ENCODE measurements at regions of chr17 and their contacts with region 1.

Region 1: DNA sequence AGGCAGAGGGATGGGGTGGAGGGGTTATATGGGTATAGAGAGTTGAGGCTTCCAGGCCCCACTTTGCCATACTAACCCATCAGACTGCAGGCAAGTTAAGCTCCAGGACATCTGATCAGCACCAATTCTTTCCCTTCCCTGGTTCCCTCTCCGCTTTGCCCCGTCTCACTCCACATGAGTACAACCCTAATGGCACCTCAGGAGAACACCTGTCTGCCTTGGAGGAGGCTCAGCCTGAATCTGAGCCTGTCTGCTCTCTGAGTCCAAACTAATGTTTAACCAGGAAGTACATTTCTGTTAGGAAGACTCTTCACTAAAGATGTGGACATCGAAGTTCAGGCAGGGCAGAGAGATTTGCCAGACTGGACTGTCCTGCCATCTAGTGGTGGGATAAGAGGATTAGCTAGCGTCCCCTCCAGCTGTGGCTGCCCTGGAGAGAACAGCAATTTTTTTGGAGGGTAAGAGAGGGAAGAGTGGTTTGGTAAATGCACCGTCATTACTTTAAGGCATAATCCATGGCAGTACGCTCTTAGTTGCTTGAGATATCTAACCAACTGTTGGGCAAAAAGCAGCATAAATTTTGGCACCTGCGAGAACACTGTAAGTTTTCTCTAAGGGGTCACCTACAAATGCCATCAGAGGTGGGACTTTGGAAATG is 29.2 kb upstream of the LRRC75A start:
- DNase-seq: peak; percentile 79
- H3K4me3 ChIP-seq: no peak overlapping the region
- H3K27ac ChIP-seq: peak overlapping the region; percentile 31
- H3K4me1 ChIP-seq: peaks cover 13% of the 10 kb centered on the region
- H3K27me3 ChIP-seq: peaks cover 0 to 2% of the 10 kb centered on the region in 2 experiments
- CTCF ChIP-seq: peak; percentile 80 to 85
- POLR2A ChIP-seq: no peak

Region 2: GRCh38 chr17:16363749-16364536 is 157.3 kb before region 1 on chr17:
- CTCF ChIA-PET with region 1: interaction called, 60 read pairs
- POLR2A ChIA-PET with region 1: no interaction called
- dilution Hi-C with region 1: no loop called
- intact Hi-C with region 1: loop called (anchors 1 kb)
- DNase-seq: peak; percentile 70
- H3K4me3 ChIP-seq: no peak overlapping the region
- H3K27ac ChIP-seq: no peak overlapping the region
- H3K4me1 ChIP-seq: no peaks in the 10 kb centered on the region
- H3K27me3 ChIP-seq: no peaks in the 10 kb centered on the region
- CTCF ChIP-seq: peak; percentile 85 to 92
- POLR2A ChIP-seq: no peak

Region 3: GRCh38 chr17:16374129-16374528 is 147.1 kb before region 1 on chr17:
- CTCF ChIA-PET with region 1: no interaction called
- POLR2A ChIA-PET with region 1: no interaction called
- dilution Hi-C with region 1: no loop called
- intact Hi-C with region 1: no loop called
- DNase-seq: peak; percentile 20
- H3K4me3 ChIP-seq: no peak overlapping the region
- H3K27ac ChIP-seq: no peak overlapping the region
- H3K4me1 ChIP-seq: no peaks in the 10 kb centered on the region
- H3K27me3 ChIP-seq: no peaks in the 10 kb centered on the region
- CTCF ChIP-seq: no peak
- POLR2A ChIP-seq: no peak

Region 4: GRCh38 chr17:16428098-16428882 is 92.9 kb before region 1 on chr17:
- CTCF ChIA-PET with region 1: interaction called, 28 read pairs
- POLR2A ChIA-PET with region 1: no interaction called
- dilution Hi-C with region 1: no loop called
- intact Hi-C with region 1: loop called (anchors 1 kb)
- DNase-seq: peak; percentile 29
- H3K4me3 ChIP-seq: no peak overlapping the region
- H3K27ac ChIP-seq: no peak overlapping the region
- H3K4me1 ChIP-seq: no peaks in the 10 kb centered on the region
- H3K27me3 ChIP-seq: no peaks in the 10 kb centered on the region
- CTCF ChIP-seq: peak; percentile 61 to 81
- POLR2A ChIP-seq: no peak

Region 5: GRCh38 chr17:16444258-16444886 is 76.8 kb before region 1 on chr17:
- CTCF ChIA-PET with region 1: interaction called, 33 read pairs
- POLR2A ChIA-PET with region 1: interaction called, 4 read pairs
- dilution Hi-C with region 1: no loop called
- intact Hi-C with region 1: no loop called
- DNase-seq: no peak
- H3K4me3 ChIP-seq: no peak overlapping the region
- H3K27ac ChIP-seq: no peak overlapping the region
- H3K4me1 ChIP-seq: peaks cover 31% of the 10 kb centered on the region
- H3K27me3 ChIP-seq: no peaks in the 10 kb centered on the region
- CTCF ChIP-seq: no peak
- POLR2A ChIP-seq: peak; percentile 8

Region 6: DNA sequence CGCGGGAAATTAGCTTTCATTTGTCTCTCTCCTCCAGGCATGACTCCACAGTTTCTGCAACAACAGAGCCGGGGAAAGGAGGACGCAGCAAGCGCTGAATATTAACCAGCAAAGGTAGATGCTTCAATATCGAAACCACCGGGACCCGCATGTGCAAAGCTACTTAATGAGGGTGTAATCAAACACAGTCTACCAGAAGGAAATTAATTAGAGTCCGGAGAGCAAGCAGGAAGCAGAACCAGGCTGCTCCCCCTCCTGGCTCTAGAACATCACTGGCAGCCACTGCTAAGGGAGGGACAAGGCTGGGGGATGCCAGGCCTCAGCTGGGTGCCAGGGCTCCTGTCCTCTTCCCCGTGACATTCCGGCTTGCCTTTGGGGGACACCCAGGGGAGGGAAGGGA is 50.9 kb before region 1 on chr17:
- CTCF ChIA-PET with region 1: interaction called, 15 read pairs
- POLR2A ChIA-PET with region 1: no interaction called
- dilution Hi-C with region 1: no loop called
- intact Hi-C with region 1: no loop called
- DNase-seq: peak; percentile 33
- H3K4me3 ChIP-seq: no peak overlapping the region
- H3K27ac ChIP-seq: no peak overlapping the region
- H3K4me1 ChIP-seq: peaks cover 20% of the 10 kb centered on the region
- H3K27me3 ChIP-seq: no peaks in the 10 kb centered on the region
- CTCF ChIP-seq: peak in 1 of 2 donors; percentile 36
- POLR2A ChIP-seq: no peak

Region 7: DNA sequence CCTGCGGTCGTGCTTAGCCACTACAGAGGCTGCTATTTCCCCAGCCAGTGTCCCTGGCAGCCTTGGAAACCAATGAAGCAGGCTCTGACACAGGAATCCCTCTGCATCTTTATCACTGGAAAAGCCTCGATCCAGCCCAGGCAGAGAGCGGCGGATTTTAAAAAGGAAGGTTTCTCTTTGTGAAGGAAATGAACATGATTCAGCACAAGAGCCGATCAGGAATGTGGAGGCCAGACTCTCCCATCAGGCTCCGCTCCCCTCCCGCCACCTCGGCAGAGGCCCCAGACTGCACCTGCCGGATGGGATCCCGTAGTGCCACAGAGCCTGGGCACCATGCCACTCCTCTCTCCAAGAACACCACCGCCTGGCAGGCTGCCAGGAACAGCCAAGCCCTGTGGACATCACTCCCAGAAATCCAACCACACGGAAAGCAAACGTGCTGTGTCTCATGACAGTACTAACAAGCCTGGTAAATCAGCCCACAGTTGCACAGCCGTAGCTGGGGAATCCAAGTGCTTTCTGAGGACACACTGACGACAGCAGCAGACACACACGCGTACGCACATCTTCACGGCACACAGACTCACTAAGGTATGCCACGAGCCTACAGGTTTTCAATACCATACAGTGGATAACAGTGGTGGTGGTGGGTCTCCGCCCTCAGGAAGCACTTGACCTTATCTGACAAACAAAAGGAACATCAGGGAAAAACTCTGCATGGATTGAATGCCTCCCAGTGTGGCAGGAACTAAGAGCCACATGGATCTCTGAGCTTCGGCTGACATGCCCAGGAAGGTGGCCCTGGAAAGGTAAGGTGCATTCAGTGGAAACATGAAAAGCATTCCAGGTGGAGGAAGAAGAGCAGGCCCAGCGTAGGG is 34.6 kb before region 1 on chr17:
- CTCF ChIA-PET with region 1: interaction called, 15 read pairs
- POLR2A ChIA-PET with region 1: no interaction called
- dilution Hi-C with region 1: no loop called
- intact Hi-C with region 1: loop called (anchors 2 kb)
- DNase-seq: peak; percentile 83
- H3K4me3 ChIP-seq: peak overlapping the region in 2 of 3 experiments; percentile 5 to 9
- H3K27ac ChIP-seq: peak overlapping the region; percentile 80
- H3K4me1 ChIP-seq: peaks cover 41% of the 10 kb centered on the region
- H3K27me3 ChIP-seq: peaks cover 0 to 6% of the 10 kb centered on the region in 2 experiments
- CTCF ChIP-seq: no peak
- POLR2A ChIP-seq: peak; percentile 52

Region 8: DNA sequence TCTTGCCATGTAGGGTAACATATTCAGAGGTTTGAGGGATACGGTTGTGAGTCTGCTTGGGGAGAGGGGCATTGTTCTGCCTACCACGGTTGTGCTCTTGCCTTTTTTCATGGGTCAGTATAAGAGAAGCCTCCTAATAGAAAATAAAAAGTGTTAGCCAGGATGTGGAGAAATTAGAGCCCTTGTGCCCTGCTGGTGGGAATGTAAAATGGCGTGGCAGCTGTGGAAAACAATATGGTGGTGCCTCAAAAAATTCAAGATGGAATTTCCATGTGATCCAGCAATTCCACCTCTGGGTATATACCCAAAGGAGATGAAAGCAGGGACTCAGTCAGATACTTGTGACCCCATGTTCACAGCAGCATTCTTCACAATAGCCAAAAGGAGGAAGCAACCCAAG is 15.0 kb before region 1 on chr17:
- CTCF ChIA-PET with region 1: interaction called, 20 read pairs
- POLR2A ChIA-PET with region 1: no interaction called
- dilution Hi-C with region 1: no loop called
- intact Hi-C with region 1: no loop called
- DNase-seq: no peak
- H3K4me3 ChIP-seq: no peak overlapping the region
- H3K27ac ChIP-seq: no peak overlapping the region
- H3K4me1 ChIP-seq: no peaks in the 10 kb centered on the region
- H3K27me3 ChIP-seq: peaks cover 7 to 12% of the 10 kb centered on the region in 2 experiments
- CTCF ChIP-seq: no peak
- POLR2A ChIP-seq: no peak

Measured in endothelial cell of umbilical vein (primary cell).